ENCODE measurements at regions of chr6 and their contacts with region 1.

Region 1: DNA sequence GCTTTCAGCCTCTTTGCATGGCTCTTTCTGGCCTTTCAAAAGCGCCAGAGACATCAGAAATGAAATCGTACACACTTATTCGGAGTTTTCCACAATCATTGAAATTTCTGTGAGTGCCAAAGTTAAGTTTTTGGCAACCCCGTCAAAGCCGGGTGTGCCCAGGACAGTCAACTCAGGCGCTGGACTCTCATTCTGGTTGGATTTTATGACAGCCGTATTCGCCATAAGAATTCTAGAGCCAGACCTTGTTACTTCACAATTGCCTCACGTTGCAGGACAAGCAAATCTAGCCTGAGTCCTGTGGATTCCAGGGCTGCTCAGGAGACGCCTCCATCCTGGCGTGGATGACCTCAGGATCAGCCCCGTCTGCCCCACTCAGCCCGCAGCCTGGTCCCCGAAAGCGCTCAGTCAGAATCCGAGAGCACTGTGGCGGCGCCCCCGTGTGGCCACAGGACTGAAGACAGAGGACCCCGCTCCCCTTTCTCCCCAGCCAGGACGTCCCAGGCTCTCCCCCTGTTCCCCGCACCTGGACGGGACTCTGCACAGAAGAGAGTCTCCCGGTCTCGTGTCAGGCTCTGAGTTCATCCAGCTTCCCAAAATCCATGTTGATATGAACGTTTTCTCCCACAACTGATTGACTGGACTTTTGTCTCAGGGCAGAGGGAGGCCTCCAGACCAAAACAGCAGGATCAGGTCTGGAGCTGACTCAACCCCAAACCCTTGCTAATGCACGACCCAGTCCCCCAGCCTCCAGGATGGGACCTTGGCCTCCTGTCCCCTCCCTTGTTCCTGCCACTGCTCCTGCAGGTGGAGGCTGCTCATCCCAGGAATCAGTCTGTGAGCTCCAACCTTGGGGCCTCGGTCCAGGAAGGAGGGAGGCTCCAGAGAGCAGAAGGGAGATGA is 38.2 kb downstream of the MICA start:
- DNase-seq: peak; percentile 94
- ATAC-seq: peak; percentile 93
- H3K4me3 Mint-ChIP-seq: no peak overlapping the region
- H3K27ac Mint-ChIP-seq: no peak overlapping the region
- H3K4me1 Mint-ChIP-seq: peaks cover 4% of the 10 kb centered on the region
- H3K27me3 Mint-ChIP-seq: peaks cover 23% of the 10 kb centered on the region
- CTCF ChIP-seq: peak; percentile 90

Region 2: GRCh38 chr6:31379850-31380249 is 61.8 kb before region 1 on chr6:
- CTCF ChIA-PET with region 1: interaction called, 10 read pairs
- POLR2A ChIA-PET with region 1: no interaction called
- intact Hi-C with region 1: no loop called
- DNase-seq: no peak
- ATAC-seq: no peak
- H3K4me3 Mint-ChIP-seq: no peak overlapping the region
- H3K27ac Mint-ChIP-seq: no peak overlapping the region
- H3K4me1 Mint-ChIP-seq: peaks cover 2% of the 10 kb centered on the region
- H3K27me3 Mint-ChIP-seq: peaks cover 9% of the 10 kb centered on the region
- CTCF ChIP-seq: no peak

Region 3: DNA sequence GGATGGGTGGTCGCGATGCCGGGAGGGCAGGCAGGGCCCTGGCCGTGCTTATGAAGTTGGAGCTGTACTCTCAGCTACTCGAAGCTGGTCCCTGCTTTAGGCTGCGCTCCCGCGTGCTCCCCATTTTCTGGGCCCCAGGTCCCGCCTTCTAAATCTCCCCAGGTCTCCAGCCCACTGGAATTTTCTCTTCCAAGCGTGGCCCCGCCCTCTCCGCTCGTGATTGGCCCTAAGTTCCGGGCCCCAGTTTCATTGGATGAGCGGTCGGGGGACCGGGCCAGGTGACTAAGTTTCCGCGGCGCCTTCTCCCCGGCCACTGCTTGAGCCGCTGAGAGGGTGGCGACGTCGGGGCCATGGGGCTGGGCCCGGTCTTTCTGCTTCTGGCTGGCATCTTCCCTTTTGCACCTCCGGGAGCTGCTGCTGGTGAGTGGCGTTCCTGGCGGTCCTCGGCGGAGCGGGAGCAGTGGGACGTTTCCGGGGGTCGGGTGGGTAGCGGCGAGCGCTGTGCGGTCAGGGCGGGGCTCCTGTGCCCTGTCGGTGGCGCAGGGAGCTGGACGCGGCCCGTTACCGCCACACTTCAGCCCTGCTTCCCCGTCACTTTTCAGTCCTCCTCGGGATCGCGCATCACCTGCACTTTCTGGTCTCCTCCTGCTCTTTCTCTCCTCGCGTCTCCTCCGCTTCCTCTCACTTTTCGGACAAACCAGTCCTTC is 38.2 kb before region 1 on chr6 and contains the start of gene MICA:
- CTCF ChIA-PET with region 1: interaction called, 98 read pairs
- POLR2A ChIA-PET with region 1: interaction called, 3 read pairs
- intact Hi-C with region 1: no loop called
- DNase-seq: peak; percentile 77
- ATAC-seq: peak; percentile 68
- H3K4me3 Mint-ChIP-seq: peak within 1 kb of the TSS; percentile 81
- H3K27ac Mint-ChIP-seq: peak within 1 kb of the TSS; percentile 71
- H3K4me1 Mint-ChIP-seq: peaks cover 57% of the 10 kb centered on the region
- H3K27me3 Mint-ChIP-seq: no peaks in the 10 kb centered on the region
- CTCF ChIP-seq: no peak
- total RNA-seq, gene MICA: 5.6 to 6.0 TPM

Region 4: DNA sequence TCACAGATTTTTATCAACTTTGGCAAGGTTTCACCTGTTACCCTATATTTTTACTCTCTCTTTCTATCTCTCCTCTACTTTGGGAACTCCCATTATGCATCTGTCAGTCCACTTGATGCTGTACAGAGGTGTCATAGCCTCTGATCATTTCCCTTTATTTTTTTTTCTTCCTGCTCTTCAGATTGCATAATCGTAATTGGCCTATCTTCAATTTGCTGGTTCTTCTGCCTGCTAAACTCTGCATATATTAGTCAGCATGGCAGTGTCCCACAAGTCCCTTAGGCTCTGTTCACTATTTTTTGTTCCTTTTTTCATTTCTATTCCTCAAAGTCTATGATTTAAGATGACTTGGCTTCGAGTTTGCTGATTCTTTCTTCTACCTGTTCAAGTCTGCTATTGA is 11.6 kb after region 1 on chr6:
- CTCF ChIA-PET with region 1: interaction called, 25 read pairs
- POLR2A ChIA-PET with region 1: interaction called, 5 read pairs
- intact Hi-C with region 1: no loop called
- DNase-seq: no peak
- ATAC-seq: no peak
- H3K4me3 Mint-ChIP-seq: no peak overlapping the region
- H3K27ac Mint-ChIP-seq: no peak overlapping the region
- H3K4me1 Mint-ChIP-seq: no peaks in the 10 kb centered on the region
- H3K27me3 Mint-ChIP-seq: peaks cover 10% of the 10 kb centered on the region
- CTCF ChIP-seq: no peak

Region 5: DNA sequence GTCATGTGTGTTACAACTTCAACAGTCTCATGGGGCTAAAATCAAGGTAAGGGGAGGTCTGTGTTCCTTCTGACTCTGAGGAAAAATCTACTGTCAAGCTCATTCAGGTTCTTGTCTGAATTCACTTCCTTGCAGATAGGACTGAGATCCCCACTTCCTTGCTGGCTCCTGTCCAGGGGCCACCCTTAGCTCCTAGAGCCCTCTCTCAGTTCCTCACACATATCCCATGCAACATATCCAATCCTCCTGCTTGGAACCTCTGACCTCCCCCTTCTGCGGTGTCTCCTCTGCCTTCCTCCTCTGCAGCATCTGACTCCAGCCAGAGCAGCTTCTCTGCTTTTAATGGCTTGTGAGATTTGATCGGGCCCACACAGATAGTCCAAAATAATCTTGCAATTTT is 29.2 kb after region 1 on chr6:
- CTCF ChIA-PET with region 1: interaction called, 10 read pairs
- POLR2A ChIA-PET with region 1: interaction called, 3 read pairs
- intact Hi-C with region 1: no loop called
- DNase-seq: no peak
- ATAC-seq: no peak
- H3K4me3 Mint-ChIP-seq: no peak overlapping the region
- H3K27ac Mint-ChIP-seq: peak overlapping the region; percentile 68
- H3K4me1 Mint-ChIP-seq: peaks cover 97% of the 10 kb centered on the region
- H3K27me3 Mint-ChIP-seq: no peaks in the 10 kb centered on the region
- CTCF ChIP-seq: no peak